H1 (cell line): ENCODE measurements at regions of chr2 and their contacts with region 1.

Region 1: DNA sequence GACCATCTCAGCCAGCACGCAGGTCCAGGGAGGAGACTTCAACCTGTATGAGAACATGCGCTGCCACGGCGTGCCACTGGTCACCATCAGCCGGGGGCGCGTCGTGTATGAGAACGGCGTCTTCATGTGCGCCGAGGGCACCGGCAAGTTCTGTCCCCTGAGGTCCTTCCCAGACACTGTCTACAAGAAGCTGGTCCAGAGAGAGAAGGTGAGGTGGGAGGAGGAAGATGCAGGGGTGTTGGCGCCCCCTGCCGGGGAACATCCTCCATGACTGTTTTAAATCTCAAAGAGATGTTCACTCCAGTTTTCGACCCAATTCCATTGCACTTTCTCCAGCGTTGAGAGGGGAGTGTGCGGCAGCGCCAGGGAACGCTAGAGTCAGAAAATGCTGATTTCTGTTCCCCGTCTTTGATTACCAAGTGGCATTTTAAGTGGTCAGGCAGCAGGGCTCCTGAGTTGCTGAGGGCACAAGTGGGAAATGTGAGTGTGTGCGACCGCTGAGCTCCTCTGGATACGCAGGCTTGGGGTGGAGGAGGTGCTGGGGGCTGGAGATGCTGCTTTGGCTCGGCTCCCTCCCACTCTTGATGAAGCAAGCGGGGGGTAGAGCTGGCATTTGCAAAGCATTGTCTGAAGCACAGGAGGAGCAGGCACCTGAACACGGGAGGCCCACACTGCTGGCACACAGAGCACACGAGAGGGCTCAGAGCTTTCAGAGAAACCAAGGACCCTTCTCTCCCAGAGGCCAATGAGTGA is 27.7 kb upstream of the MAPRE3 start:
- DNase-seq: peak; percentile 69 to 91
- H3K4me3 ChIP-seq: peak overlapping the region; percentile 37 to 59 (median 40); a peak in 7 of 8 replicates
- H3K27ac ChIP-seq: no peak overlapping the region
- H3K4me1 ChIP-seq: peaks cover 2 to 23% (median 7%) of the 10 kb centered on the region in 4 experiments
- H3K27me3 ChIP-seq: peaks cover 0 to 3% (median 0%) of the 10 kb centered on the region in 4 experiments; a peak in 1 of 7 replicates
- CTCF ChIP-seq: peak; percentile 85 to 90 (median 85)
- EP300 ChIP-seq: no peak
- POLR2A ChIP-seq: no peak
- RAD21 ChIP-seq: peak; percentile 82 to 89

Region 2: DNA sequence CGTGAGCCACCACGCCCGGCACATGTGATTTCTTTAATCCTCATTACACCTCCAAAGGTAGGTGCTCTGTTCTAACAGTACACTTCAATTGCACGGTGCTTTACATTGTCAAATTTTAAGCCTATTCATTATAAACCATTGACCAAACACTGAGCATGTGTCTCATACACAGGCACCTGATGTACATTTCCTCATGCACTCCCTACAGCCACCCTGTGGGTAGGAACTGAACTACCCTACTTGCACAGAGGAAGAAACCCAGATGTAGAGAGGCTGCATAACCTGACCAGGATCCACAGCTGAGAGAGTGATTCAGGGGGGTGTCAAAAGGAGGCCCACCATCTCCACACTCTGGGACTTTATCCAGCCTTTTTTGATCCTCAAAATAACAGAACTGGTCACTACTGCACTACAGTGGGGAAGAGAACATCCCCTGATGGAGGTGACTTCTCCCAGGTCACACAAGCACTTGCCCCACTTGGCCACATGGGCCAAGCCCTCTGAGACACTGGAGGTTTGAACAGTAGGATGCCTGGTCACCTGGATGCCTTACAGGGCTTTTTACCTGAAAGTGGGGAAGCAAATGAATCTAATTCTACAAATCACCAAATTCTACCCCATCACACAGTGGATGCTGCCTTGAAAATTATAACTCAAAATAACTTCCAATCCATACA is 101.6 kb before region 1 on chr2:
- CTCF ChIA-PET with region 1: interaction called, 235 read pairs
- POLR2A ChIA-PET with region 1: interaction called, 5 read pairs
- DNase-seq: no peak
- H3K4me3 ChIP-seq: no peak overlapping the region
- H3K27ac ChIP-seq: no peak overlapping the region
- H3K4me1 ChIP-seq: peaks cover 0 to 2% (median 0%) of the 10 kb centered on the region in 4 experiments; a peak in 2 of 7 replicates
- H3K27me3 ChIP-seq: peaks cover 0 to 12% (median 5%) of the 10 kb centered on the region in 4 experiments; a peak in 4 of 7 replicates
- CTCF ChIP-seq: peak in 2 of 3 experiments; percentile 5 to 11; a peak in 1 of 4 replicates
- EP300 ChIP-seq: no peak
- POLR2A ChIP-seq: no peak
- RAD21 ChIP-seq: 0 out of 4 replicates have a peak, but pooled peaks of 1 of the 2 experiments have one; percentile 16

Region 3: DNA sequence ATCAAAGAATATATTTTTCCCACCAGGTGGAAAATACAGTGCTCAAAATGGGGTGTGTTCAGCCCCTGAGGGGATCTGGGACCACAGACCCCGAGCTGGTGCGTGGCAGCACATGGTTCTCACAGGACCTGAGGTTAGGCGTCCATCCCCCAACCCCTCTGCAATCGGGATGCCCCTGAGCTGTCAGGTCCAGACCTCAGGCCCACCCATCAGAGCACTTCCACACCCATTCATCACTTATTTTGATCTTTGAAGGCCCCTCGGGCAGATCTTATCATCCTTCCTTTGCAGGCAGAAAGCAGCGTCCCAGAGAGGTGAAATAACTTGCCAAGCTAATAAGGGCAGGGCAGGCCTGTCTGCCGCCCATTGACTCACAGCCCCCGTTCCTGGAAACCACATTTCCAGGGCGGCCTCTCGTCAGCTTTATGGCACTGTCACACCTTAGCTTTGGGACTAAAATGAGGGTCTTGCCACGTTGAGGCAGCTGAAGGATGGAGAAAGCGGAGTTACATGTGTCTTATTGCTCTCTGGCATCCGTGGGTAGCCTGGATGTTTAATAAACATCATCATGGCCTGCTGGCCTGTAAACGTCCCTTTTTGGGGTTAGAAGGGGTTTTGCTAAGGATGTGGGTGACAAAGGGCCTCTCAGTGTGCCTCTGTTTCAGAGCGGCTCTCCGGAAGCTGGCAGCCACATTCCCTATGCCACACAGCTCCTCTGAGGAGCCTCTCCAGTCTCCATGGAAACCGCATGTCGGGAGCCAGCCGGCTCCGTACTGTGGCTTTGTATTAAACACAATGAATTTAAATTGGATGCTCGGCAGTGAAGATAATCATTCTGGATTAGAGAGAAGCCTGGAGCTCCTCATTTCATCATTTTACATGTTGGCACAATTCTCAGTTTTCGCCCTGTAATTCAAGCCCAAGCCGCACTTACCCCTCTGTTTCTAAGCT is 30.5 kb before region 1 on chr2:
- CTCF ChIA-PET with region 1: interaction called, 39 read pairs
- POLR2A ChIA-PET with region 1: no interaction called
- DNase-seq: peak in 1 of 2 experiments; percentile 62
- H3K4me3 ChIP-seq: peak overlapping the region in 2 of 4 experiments; percentile 13 to 48; a peak in 3 of 8 replicates
- H3K27ac ChIP-seq: no peak overlapping the region
- H3K4me1 ChIP-seq: peaks cover 10 to 30% (median 20%) of the 10 kb centered on the region in 4 experiments
- H3K27me3 ChIP-seq: no peaks in the 10 kb centered on the region; a peak in 1 of 7 replicates
- CTCF ChIP-seq: no peak
- EP300 ChIP-seq: no peak
- POLR2A ChIP-seq: no peak
- RAD21 ChIP-seq: no peak

Region 4: GRCh38 chr2:26959331-26959730 is 16.6 kb after region 1 on chr2:
- CTCF ChIA-PET with region 1: interaction called, 51 read pairs
- POLR2A ChIA-PET with region 1: no interaction called
- DNase-seq: no peak
- H3K4me3 ChIP-seq: no peak overlapping the region
- H3K27ac ChIP-seq: no peak overlapping the region
- H3K4me1 ChIP-seq: peaks cover 0 to 2% (median 0%) of the 10 kb centered on the region in 4 experiments; a peak in 1 of 7 replicates
- H3K27me3 ChIP-seq: no peaks in the 10 kb centered on the region; a peak in 1 of 7 replicates
- CTCF ChIP-seq: no peak
- EP300 ChIP-seq: no peak
- POLR2A ChIP-seq: no peak
- RAD21 ChIP-seq: no peak